ENCODE measurements at regions of chr5 and their contacts with region 1.

Region 1: DNA sequence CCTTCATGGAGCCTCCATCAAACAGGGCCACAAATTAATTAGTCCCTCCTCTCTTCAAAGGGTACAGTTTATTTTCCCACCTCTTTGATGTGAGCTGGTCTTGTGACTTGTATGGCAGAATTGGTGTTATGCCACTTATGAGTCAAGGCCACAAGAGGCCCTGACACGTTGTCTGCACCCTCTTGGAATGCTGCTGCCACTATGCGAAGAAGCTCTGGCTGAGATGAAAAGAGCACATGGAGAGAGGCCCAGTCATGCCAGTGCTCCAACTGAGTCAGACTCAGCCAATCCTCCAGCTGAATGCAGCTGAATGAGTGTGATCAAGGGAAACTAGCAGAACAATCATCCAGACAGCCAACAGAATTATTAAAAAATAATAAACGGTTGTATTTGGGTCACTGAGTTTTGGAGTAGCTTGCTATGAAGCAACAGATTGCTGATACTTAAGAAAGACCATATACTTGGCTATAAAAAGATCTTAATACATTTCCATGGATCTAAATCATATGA is 128.3 kb downstream of the MARCHF11 start:
- DNase-seq: no peak
- H3K4me3 ChIP-seq: no peak overlapping the region
- H3K27ac ChIP-seq: no peak overlapping the region
- H3K4me1 ChIP-seq: no peaks in the 10 kb centered on the region
- H3K27me3 ChIP-seq: no peaks in the 10 kb centered on the region
- CTCF ChIP-seq: no peak
- POLR2A ChIP-seq: no peak

Region 2: DNA sequence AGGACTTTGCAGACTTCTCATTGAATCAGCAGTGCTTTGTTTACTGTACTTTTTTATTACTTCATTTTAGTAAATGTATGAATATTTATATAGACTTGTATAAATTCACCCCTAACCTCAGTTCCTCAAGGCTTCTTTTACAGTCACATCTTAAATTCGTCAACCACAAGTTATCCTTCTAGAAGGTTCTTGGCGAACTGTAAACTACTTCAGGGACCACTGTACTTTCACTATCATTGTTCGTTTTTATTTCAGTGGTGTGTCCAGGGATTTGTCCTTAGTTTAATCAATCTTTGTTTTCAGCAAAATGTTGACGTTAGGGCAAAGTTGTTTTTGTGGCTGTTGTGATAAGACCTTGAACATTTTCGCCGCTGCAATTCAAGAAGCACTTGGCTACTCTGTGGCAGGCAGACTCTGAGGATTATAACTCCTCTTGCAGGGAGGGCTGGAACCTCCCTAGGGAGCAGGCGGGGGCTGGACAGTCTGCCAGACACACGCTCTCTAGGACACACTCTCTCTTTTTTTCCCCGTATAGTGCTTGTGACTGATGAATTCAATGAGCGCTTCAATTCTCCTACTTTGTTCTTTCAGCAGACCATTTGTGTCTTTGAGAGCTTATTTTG is 298.5 kb before region 1 on chr5:
- intact Hi-C with region 1: no loop called
- DNase-seq: no peak
- H3K4me3 ChIP-seq: peak overlapping the region in 2 of 3 donors; percentile 12 to 52
- H3K27ac ChIP-seq: no peak overlapping the region
- H3K4me1 ChIP-seq: no peaks in the 10 kb centered on the region
- H3K27me3 ChIP-seq: no peaks in the 10 kb centered on the region
- CTCF ChIP-seq: no peak
- POLR2A ChIP-seq: no peak

Region 3: GRCh38 chr5:16108418-16108817 is 57.1 kb after region 1 on chr5:
- intact Hi-C with region 1: loop called (anchors 2 kb)
- DNase-seq: no peak
- H3K4me3 ChIP-seq: no peak overlapping the region
- H3K27ac ChIP-seq: no peak overlapping the region
- H3K4me1 ChIP-seq: no peaks in the 10 kb centered on the region
- H3K27me3 ChIP-seq: no peaks in the 10 kb centered on the region
- CTCF ChIP-seq: no peak
- POLR2A ChIP-seq: no peak

Region 4: DNA sequence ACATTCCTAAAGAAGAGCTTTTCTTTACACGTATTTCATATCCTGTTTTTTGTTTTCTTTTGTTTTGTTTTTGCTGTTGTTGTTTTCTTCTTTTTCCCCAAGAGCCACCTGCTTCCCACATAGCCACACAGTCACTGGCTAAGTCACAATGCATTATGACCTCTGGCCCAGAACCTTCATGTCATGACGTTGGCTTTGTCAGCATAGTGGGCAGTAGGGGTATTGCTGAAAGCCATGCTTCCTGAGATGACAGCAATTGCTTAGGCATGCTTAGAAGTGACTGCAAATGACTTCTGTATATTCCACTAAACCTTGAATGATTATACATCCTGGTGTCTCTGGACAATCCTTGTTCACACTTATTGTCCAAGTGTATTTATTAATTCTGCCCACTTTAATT is 1958.8 kb after region 1 on chr5:
- intact Hi-C with region 1: loop called (anchors 10 kb)
- DNase-seq: no peak
- H3K4me3 ChIP-seq: no peak overlapping the region
- H3K27ac ChIP-seq: no peak overlapping the region
- H3K4me1 ChIP-seq: no peaks in the 10 kb centered on the region
- H3K27me3 ChIP-seq: no peaks in the 10 kb centered on the region
- CTCF ChIP-seq: no peak
- POLR2A ChIP-seq: no peak

Measured in breast epithelium (tissue), 4 donors.